WTC11 (cell line): ENCODE measurements at regions of chr5 and their contacts with region 1.

Region 1: DNA sequence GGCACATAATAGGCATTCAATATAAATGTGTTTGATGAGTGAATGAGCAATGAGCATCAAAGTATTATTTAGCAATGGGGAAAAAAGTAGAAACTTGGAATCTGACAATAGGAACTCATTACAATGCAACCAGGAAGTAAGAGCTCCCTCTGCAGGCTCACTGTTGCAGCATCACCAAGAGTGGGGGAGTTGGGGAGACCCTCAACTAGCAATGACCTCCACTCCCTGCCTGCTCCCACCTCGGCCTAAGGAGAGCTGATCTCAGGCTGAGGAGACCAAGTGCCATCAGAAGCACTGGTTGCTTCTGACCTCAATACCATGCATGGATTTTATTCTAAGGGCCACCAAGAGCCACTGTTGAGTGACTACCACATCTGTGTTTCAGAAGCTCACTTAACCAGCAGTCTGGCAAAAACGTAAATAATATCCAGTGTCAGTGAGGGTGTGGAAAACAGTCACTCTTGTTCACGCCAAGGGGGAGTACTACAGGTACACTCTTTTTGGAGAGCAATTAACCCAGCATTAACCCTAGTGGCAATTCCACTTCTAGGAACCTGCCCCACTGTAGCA is 8.0 kb downstream of the VDAC1 start:
- DNase-seq: peak; percentile 57
- ATAC-seq: peak; percentile 84
- H3K4me3 Mint-ChIP-seq: no peak overlapping the region
- H3K27ac Mint-ChIP-seq: peak overlapping the region; percentile 15; the same call in 1 of the 2 replicates
- H3K4me1 Mint-ChIP-seq: peaks cover 54% of the 10 kb centered on the region
- H3K27me3 Mint-ChIP-seq: no peaks in the 10 kb centered on the region
- CTCF ChIP-seq: peak; percentile 43; the same call in 1 of the 2 replicates

Region 2: DNA sequence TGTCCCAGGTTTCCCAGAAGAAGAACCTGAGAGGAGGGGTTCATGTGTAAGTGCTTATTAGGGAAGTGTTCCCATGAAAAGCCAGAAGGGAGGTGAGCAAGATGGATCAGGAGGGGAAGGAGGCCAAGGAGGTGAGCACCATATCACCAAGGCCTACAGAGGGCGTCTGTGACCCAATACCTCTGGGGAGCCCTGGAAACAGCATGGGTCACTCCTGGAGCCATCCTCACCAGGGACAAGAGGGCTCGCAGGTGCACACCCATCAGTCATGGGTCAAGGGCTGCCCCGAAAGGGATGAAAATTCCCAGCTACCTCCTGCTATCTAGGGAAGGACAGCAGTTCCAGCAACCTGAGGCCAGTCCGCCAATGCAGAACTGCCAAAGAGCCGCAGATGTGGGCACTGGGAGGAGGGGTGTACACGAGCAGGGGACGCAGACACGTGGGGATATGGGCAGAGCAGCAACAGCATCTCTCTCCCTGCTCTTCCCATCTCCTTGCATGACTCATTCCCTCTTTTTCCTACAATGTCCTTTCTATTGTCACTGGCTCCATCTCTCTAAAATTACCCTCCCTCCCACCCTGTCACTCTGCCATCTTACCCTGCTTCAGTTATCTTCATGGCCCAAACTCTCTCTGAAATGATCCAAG is 216.8 kb before region 1 on chr5:
- CTCF ChIA-PET with region 1: no interaction called
- POLR2A ChIA-PET with region 1: no interaction called
- DNase-seq: peak; percentile 33
- ATAC-seq: peak; percentile 88
- H3K4me3 Mint-ChIP-seq: no peak overlapping the region
- H3K27ac Mint-ChIP-seq: no peak overlapping the region
- H3K4me1 Mint-ChIP-seq: no peaks in the 10 kb centered on the region
- H3K27me3 Mint-ChIP-seq: peaks cover 3% of the 10 kb centered on the region
- CTCF ChIP-seq: no peak

Region 3: GRCh38 chr5:133790898-133791297 is 205.9 kb before region 1 on chr5:
- CTCF ChIA-PET with region 1: no interaction called
- POLR2A ChIA-PET with region 1: no interaction called
- DNase-seq: no peak
- ATAC-seq: no peak
- H3K4me3 Mint-ChIP-seq: no peak overlapping the region
- H3K27ac Mint-ChIP-seq: no peak overlapping the region
- H3K4me1 Mint-ChIP-seq: peaks cover 25% of the 10 kb centered on the region
- H3K27me3 Mint-ChIP-seq: peaks cover 9% of the 10 kb centered on the region; the same call in 1 of the 2 replicates
- CTCF ChIP-seq: no peak

Region 4: DNA sequence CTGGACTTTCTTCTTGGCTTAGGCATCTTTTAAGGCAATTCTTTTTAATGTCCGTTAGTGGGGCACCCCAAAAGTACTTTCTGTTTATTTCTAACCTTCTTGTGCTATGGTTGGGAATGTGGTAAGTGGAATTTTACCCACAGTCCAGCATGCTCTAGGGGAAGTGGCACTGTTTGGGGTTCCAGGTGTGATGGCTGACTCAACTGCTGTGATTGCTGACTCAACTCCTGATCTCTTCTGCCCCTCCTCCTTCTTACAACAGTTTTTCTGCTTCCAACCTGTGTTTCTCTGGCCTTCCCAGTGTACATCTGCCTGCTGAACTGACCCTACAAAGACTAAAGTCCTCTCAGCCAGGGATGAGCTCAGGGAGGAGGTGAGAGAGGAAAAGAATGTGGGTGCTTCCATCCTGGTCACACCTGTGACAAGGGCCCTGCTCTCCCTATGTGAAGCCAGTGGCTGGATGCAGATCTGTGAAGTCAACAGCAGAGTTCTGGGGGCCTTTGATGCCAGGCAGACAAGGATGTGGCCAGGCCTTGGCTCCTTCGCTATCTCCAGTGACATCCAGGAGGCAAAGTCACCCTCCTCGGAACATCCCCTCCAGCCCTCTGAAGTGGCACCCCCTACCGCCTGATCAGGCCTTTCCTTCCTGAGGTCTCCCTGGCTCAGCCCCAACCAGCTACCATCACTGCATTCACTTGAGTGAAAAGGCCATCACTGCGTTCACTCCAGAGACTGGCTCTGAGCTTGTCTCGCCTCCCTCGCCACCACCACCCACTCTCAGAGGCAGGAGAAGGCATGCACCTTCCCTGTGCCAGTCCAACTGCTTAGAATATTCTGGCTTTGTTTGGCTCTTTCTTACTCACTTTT is 100.6 kb before region 1 on chr5:
- CTCF ChIA-PET with region 1: no interaction called
- POLR2A ChIA-PET with region 1: no interaction called
- DNase-seq: no peak
- ATAC-seq: no peak
- H3K4me3 Mint-ChIP-seq: no peak overlapping the region
- H3K27ac Mint-ChIP-seq: no peak overlapping the region
- H3K4me1 Mint-ChIP-seq: no peaks in the 10 kb centered on the region
- H3K27me3 Mint-ChIP-seq: no peaks in the 10 kb centered on the region
- CTCF ChIP-seq: no peak

Region 5: GRCh38 chr5:133926489-133927299 is 70.1 kb before region 1 on chr5:
- CTCF ChIA-PET with region 1: no interaction called
- POLR2A ChIA-PET with region 1: no interaction called
- DNase-seq: no peak
- ATAC-seq: no peak
- H3K4me3 Mint-ChIP-seq: no peak overlapping the region
- H3K27ac Mint-ChIP-seq: no peak overlapping the region
- H3K4me1 Mint-ChIP-seq: peaks cover 15% of the 10 kb centered on the region
- H3K27me3 Mint-ChIP-seq: no peaks in the 10 kb centered on the region; the same call in 1 of the 2 replicates
- CTCF ChIP-seq: no peak

Region 6: GRCh38 chr5:133977161-133977787 is 19.5 kb before region 1 on chr5:
- CTCF ChIA-PET with region 1: interaction called, 43 read pairs
- POLR2A ChIA-PET with region 1: no interaction called
- DNase-seq: no peak
- ATAC-seq: no peak
- H3K4me3 Mint-ChIP-seq: no peak overlapping the region
- H3K27ac Mint-ChIP-seq: peak overlapping the region; percentile 56; the same call in 1 of the 2 replicates
- H3K4me1 Mint-ChIP-seq: 0 out of 2 replicates have a peak, but pooled peaks cover 3% of the 10 kb centered on the region
- H3K27me3 Mint-ChIP-seq: no peaks in the 10 kb centered on the region
- CTCF ChIP-seq: no peak

Region 7: GRCh38 chr5:134018154-134018985 is 21.6 kb after region 1 on chr5:
- CTCF ChIA-PET with region 1: interaction called, 22 read pairs
- POLR2A ChIA-PET with region 1: no interaction called
- DNase-seq: no peak
- ATAC-seq: no peak
- H3K4me3 Mint-ChIP-seq: no peak overlapping the region
- H3K27ac Mint-ChIP-seq: no peak overlapping the region
- H3K4me1 Mint-ChIP-seq: peaks cover 10% of the 10 kb centered on the region
- H3K27me3 Mint-ChIP-seq: peaks cover 4% of the 10 kb centered on the region
- CTCF ChIP-seq: no peak